Activated T-helper 1 cell treated with anti-CD3 and anti-CD28 coated beads, Interleukin-12 subunit alpha, Interleukin-12 subunit beta, Interleukin-2, Interleukin-4 antibody, amounts not matched to agents 30 ng/mL and 10 ng/mL and 1 ng/mL, durations not matched to agents 14 hours and 24 hours and 36 hours (primary cell): ENCODE measurements at regions of chr3 and their contacts with region 1.

Region 1: GRCh38 chr3:119293871-119294695 is at the start of gene ARHGAP31:
- DNase-seq: peak; percentile 82
- H3K4me3 Mint-ChIP-seq: peak within 1 kb of the TSS; percentile 85
- H3K27ac Mint-ChIP-seq: peak within 1 kb of the TSS; percentile 78
- H3K4me1 Mint-ChIP-seq: peaks cover 55% of the 10 kb centered on the region
- H3K27me3 Mint-ChIP-seq: peaks cover 42% of the 10 kb centered on the region
- total RNA-seq, gene ARHGAP31: 7.5 and 8.0 TPM in 2 replicates

Region 2: DNA sequence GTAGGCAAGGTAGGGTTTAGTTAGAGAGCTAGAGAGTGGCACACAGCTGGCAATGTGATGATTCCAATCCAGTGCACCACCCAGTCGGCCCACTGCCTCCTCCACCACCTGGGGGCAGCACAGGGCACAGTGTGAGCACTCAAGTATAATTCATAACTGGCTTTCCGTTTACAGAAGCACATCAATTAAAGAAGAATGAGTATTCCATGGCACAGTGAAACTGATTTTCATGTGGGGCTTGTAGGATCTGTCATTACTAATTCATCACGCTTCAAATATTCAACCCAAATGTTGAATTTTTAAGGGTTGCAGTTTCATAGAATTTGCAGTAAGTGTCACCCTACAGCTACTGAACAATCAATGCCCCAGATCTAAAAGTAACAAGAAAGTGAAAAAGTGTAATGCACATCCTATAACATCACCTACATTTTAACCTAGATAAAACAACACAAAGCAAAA is 409.3 kb before region 1 on chr3:
- intact Hi-C with region 1: no loop called
- DNase-seq: peak; percentile 57
- H3K4me3 Mint-ChIP-seq: no peak overlapping the region
- H3K27ac Mint-ChIP-seq: no peak overlapping the region
- H3K4me1 Mint-ChIP-seq: peaks cover 8% of the 10 kb centered on the region
- H3K27me3 Mint-ChIP-seq: peaks cover 6% of the 10 kb centered on the region

Region 3: DNA sequence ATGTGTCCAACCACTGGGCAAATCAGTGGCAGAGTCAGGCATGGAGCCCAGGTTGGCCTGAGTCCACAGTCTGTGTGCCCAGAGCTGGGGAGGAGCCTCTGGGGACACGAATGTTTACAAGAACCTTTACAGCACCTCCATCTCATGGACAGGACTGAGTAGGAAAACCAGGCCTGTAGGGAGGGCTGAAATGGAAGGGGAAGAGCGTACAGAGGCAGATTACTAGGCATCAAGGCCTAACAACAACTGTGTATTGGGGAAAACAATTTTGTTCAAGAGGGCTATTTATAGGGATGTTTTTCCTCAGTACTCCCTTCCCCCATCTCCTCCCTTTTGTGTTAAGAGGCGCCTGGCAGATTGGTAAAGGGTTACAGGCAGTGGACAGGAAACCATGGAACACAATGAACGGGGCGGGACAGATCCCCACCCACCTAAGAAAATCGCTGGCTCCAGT is 15.0 kb before region 1 on chr3:
- intact Hi-C with region 1: loop called (anchors 2 kb)
- DNase-seq: no peak
- H3K4me3 Mint-ChIP-seq: no peak overlapping the region
- H3K27ac Mint-ChIP-seq: no peak overlapping the region
- H3K4me1 Mint-ChIP-seq: peaks cover 5% of the 10 kb centered on the region
- H3K27me3 Mint-ChIP-seq: peaks cover 7% of the 10 kb centered on the region

Region 4: DNA sequence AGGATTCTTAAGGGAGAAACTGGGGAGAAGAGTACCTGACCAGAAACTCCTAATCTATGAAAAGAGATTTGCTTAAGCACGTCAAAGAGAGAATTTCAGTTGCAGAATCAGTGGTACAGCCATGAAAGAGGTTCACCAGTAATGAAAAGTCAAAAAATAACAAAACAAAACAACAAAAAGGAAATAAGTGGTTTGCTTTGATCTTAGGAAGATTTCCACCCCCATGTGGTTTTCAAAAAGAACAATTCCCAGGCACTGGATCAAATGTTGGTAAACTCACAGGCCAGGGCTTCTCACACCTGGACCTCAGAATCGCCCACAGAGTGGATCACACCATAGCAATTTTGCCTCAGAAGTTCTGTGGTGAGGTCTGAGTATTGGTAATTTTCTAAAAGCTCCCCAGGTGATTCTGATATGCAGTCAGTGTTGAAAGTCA is 101.9 kb after region 1 on chr3:
- intact Hi-C with region 1: loop called (anchors 1 kb)
- DNase-seq: peak; percentile 2
- H3K4me3 Mint-ChIP-seq: no peak overlapping the region
- H3K27ac Mint-ChIP-seq: peak overlapping the region; percentile 63
- H3K4me1 Mint-ChIP-seq: peaks cover 36% of the 10 kb centered on the region
- H3K27me3 Mint-ChIP-seq: peaks cover 9% of the 10 kb centered on the region

Region 5: GRCh38 chr3:119498186-119498987 is 204.3 kb after region 1 on chr3 and contains the start of gene TIMMDC1:
- intact Hi-C with region 1: loop called (anchors 2 kb)
- DNase-seq: peak; percentile 96
- H3K4me3 Mint-ChIP-seq: peak within 1 kb of the TSS; percentile 100
- H3K27ac Mint-ChIP-seq: peak within 1 kb of the TSS; percentile 99
- H3K4me1 Mint-ChIP-seq: peaks cover 33% of the 10 kb centered on the region
- H3K27me3 Mint-ChIP-seq: no peaks in the 10 kb centered on the region
- total RNA-seq, gene TIMMDC1: 124 and 126 TPM in 2 replicates

Region 6: DNA sequence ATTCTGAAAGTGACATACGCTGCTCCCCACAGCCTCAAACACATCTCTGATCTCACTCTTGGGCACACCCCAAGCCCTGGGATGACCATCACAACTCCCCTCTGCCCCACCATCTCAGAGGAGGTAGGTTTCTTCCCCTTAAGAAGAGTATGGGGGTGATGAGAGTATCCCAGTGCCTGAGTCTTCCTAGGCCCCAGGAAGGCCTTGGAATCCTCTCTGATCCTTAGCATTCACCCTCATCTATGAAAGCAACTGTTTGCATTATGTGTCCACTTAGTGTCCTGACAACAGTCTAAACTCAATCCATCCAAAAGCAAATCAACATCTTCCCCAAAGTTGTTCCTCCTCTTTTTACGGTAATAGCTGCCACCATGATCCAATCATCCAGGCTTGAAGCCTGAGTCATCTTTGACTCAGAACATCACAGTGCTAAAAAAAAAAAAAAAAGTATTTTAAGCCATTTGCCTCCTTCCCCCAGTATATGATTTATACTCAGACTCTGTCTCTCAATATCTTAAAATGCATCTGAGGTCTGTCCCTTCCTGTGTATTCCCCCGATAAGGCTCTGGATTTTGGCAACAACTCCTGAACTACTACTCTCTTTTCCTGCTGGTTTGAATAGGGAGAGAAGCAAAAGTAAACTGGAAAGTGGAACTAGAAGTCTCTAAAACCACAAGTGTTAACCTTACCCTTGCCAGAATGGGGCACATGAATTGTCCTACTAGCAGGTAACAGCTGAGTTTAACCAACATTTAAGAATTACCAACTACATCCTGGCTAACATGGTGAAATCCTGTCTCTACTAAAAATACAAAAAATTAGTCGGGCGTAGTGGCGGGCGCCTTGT is 343.8 kb after region 1 on chr3:
- intact Hi-C with region 1: loop called (anchors 1 kb)
- DNase-seq: no peak
- H3K4me3 Mint-ChIP-seq: peak overlapping the region; percentile 47
- H3K27ac Mint-ChIP-seq: peak overlapping the region; percentile 89
- H3K4me1 Mint-ChIP-seq: peaks cover 45% of the 10 kb centered on the region
- H3K27me3 Mint-ChIP-seq: peaks cover under 1% of the 10 kb centered on the region